Calu3 (cell line): ENCODE measurements at regions of chr1 and their contacts with region 1.

Region 1: DNA sequence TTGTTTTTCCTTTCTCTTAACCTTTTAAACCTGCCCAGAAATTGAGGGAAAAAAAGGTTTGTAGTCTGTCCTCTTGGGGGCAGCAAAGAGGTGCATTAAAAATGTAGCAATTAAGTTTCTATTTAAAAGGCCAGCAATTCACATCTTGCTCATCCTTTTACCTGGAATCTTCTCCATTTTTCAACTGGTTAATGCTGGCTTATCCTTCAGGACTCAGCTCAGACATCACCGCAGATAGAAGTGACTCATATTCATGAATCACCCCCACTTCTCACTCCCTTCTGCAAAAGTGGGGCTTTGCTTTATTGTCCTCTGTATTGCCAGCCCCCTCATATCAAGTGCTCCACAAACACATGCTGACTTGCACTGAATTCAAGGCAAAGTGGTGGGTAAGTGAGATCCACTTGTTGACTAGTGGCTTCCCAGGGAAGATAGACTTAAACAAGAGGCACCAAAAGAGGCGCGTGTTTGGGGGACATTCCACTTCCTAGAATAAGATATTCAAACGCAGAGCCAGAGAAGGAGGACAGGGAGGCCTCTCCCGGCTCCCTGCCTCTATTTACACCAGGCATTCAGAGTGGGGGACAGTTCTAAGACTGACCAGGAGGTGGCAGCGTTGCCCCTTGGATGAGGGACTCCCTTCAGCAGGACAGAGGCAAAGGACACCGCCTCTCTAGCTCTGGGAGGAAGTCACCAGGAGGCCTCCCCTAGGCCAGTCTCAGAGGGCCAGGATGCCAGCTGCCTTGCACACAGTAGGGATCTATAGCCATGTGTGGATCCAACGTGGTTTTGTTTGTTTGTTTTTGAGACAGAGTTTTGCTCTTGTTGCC is 23.2 kb upstream of the ZNF648 start:
- DNase-seq: peak; percentile 93
- H3K4me3 Mint-ChIP-seq: no peak overlapping the region
- H3K27ac Mint-ChIP-seq: no peak overlapping the region
- H3K4me1 Mint-ChIP-seq: peaks cover 15% of the 10 kb centered on the region
- H3K27me3 Mint-ChIP-seq: no peaks in the 10 kb centered on the region
- CTCF ChIP-seq: peak; percentile 93

Region 2: GRCh38 chr1:181479137-181479745 is 605.5 kb before region 1 on chr1:
- CTCF ChIA-PET with region 1: interaction called, 30 read pairs
- intact Hi-C with region 1: loop called (anchors 1 kb)
- DNase-seq: peak; percentile 59
- H3K4me3 Mint-ChIP-seq: no peak overlapping the region
- H3K27ac Mint-ChIP-seq: no peak overlapping the region
- H3K4me1 Mint-ChIP-seq: no peaks in the 10 kb centered on the region
- H3K27me3 Mint-ChIP-seq: peaks cover 39% of the 10 kb centered on the region
- CTCF ChIP-seq: peak; percentile 66

Region 3: DNA sequence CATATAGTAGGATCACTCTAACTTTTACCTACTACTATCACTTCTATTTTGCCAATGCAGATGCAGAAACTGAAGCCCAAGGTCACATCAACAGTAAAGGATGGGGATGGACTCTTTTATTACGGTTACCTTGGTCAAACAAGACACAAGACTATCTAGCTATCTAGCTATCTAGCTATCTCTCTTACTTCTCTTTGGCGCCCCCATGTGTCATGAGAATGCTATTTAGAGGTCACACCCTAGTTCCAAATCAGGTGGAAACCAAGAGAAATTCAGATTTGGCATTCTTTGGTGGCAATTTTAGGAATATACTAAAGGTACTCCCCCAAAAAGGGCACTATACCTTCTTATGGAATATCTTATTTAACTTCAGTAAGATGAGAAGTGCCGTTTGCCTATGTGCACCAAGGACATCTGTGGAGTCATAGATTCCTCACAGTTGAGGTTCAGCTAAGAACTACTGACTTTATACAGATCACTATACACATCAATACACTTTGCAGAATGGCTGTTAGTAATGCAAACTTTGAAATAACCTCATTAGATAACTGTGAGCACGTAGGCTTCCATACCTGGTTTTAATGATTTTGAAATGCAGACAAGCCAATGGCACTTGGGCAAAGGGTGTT is 29.9 kb before region 1 on chr1:
- CTCF ChIA-PET with region 1: interaction called, 13 read pairs
- intact Hi-C with region 1: no loop called
- DNase-seq: peak; percentile 75
- H3K4me3 Mint-ChIP-seq: no peak overlapping the region
- H3K27ac Mint-ChIP-seq: no peak overlapping the region
- H3K4me1 Mint-ChIP-seq: no peaks in the 10 kb centered on the region
- H3K27me3 Mint-ChIP-seq: peaks cover 2% of the 10 kb centered on the region
- CTCF ChIP-seq: peak; percentile 62

Region 4: GRCh38 chr1:182143154-182143657 is 58.5 kb after region 1 on chr1:
- CTCF ChIA-PET with region 1: interaction called, 21 read pairs
- intact Hi-C with region 1: loop called (anchors 1 kb)
- DNase-seq: peak; percentile 96
- H3K4me3 Mint-ChIP-seq: no peak overlapping the region
- H3K27ac Mint-ChIP-seq: no peak overlapping the region
- H3K4me1 Mint-ChIP-seq: peaks cover 47% of the 10 kb centered on the region
- H3K27me3 Mint-ChIP-seq: no peaks in the 10 kb centered on the region
- CTCF ChIP-seq: peak; percentile 93

Region 5: DNA sequence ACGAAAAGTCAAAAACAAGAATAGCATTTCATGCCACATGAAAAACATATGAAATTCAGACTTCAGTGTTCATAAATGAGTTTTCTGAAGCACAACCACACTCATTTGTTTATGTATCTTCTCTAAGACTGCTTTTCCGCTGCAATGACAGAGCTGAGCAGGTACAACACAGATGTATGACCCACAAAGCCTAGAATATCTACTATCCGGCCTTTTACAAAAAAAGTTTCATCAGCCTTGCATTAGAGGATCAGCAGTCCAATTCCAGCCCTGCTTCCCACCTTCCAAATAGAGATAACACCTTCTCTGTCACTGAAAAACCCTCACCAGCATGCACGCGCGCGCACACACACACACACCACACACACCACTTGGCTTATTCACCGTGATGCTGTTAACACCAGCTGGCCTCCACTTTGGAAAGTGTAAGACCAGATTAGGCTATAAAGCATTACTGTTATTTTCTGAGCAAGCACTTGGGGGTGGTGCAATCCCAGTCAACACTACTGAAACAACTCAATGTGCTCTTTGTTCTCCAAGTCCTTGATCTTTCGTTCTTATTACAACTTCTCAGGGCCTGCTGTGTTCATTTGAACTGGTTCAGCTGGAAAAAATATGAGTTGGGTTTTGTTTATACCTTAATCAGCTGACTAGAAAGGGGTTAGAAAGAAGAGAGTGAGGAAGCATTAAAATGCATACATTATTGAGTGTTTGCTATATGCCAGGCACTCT is 216.9 kb after region 1 on chr1:
- CTCF ChIA-PET with region 1: no interaction called
- intact Hi-C with region 1: loop called (anchors 2 kb)
- DNase-seq: peak; percentile 57
- H3K4me3 Mint-ChIP-seq: no peak overlapping the region
- H3K27ac Mint-ChIP-seq: peak overlapping the region; percentile 43
- H3K4me1 Mint-ChIP-seq: peaks cover 31% of the 10 kb centered on the region
- H3K27me3 Mint-ChIP-seq: no peaks in the 10 kb centered on the region
- CTCF ChIP-seq: no peak

Region 6: DNA sequence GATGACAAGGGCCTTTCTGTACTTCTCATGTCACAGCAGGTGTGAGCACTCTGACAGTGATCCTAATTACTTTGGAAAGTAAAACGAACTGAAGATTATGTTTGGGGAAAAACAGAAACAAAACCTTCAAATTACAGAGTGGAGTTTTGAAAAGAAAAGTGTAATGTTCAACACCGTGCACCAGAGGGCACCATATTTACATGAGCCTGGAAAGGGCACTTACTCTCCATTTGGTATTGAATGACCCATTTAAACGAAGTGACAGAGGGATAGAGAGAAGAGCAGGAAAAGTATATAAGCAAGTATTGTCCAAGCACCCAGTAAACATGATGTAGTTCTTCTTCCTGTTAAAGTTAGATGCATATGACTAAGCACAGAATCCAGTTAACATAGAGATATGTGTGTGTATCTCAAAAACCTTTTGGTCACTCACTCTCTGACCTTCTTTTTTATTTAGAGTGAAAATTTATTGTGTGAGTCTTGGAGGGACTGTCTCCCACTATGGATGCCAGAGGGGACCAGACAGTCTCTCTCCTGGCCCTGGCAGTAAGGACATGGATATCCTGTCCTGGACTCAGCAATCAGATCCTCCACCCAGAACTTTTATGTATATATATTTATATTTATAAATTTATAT is 361.4 kb after region 1 on chr1:
- CTCF ChIA-PET with region 1: no interaction called
- intact Hi-C with region 1: loop called (anchors 1 kb)
- DNase-seq: peak; percentile 60
- H3K4me3 Mint-ChIP-seq: no peak overlapping the region
- H3K27ac Mint-ChIP-seq: no peak overlapping the region
- H3K4me1 Mint-ChIP-seq: no peaks in the 10 kb centered on the region
- H3K27me3 Mint-ChIP-seq: peaks cover 40% of the 10 kb centered on the region
- CTCF ChIP-seq: peak; percentile 55

Region 7: GRCh38 chr1:182781841-182782586 is 697.3 kb after region 1 on chr1:
- CTCF ChIA-PET with region 1: no interaction called
- intact Hi-C with region 1: loop called (anchors 2 kb)
- DNase-seq: peak; percentile 80
- H3K4me3 Mint-ChIP-seq: no peak overlapping the region
- H3K27ac Mint-ChIP-seq: no peak overlapping the region
- H3K4me1 Mint-ChIP-seq: peaks cover 10% of the 10 kb centered on the region
- H3K27me3 Mint-ChIP-seq: peaks cover 7% of the 10 kb centered on the region
- CTCF ChIP-seq: peak; percentile 83